ENCODE measurements at regions of chr2 and their contacts with region 1.

Region 1: GRCh38 chr2:215442404-215442794 is 6.5 kb upstream of the FN1 start:
- DNase-seq: no peak
- ATAC-seq: no peak
- H3K4me3 ChIP-seq: no peak overlapping the region
- H3K27ac ChIP-seq: no peak overlapping the region
- H3K4me1 ChIP-seq: no peaks in the 10 kb centered on the region
- H3K27me3 ChIP-seq: no peaks in the 10 kb centered on the region
- CTCF ChIP-seq: no peak
- POLR2A ChIP-seq: no peak
- RAD21 ChIP-seq: no peak

Region 2: DNA sequence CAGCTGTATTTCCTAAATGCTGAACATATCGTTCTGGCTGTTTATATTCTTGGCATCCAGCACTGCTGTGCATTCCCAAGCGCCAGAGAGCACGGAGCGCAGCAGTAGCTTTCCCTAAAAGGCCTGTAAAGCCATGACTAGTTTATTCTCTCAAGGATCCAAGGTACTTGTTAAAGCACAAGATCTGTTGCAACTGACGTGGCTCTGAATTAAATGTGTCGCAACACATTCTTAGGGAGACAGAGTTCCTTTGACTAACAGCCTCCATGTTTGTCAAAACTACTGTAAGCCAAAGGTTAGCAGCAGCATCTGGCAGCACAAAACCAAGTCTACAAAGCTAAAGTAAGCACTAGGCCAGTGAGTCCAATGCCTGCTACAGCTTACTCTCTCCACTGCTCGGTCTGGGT is 182.0 kb after region 1 on chr2:
- CTCF ChIA-PET with region 1: interaction called, 3 read pairs
- POLR2A ChIA-PET with region 1: interaction called, 20 read pairs
- dilution Hi-C with region 1: no loop called
- in situ Hi-C with region 1: no loop called
- intact Hi-C with region 1: no loop called
- DNase-seq: peak; percentile 100
- ATAC-seq: peak; percentile 95
- H3K4me3 ChIP-seq: no peak overlapping the region
- H3K27ac ChIP-seq: peak overlapping the region; percentile 92; the same call in 1 of the 2 replicates
- H3K4me1 ChIP-seq: peaks cover 11% of the 10 kb centered on the region
- H3K27me3 ChIP-seq: no peaks in the 10 kb centered on the region
- CTCF ChIP-seq: no peak
- POLR2A ChIP-seq: 0 out of 2 replicates have a peak, but pooled peaks have one; percentile 10
- RAD21 ChIP-seq: peak; percentile 30

Measured in IMR-90 (cell line).